CD8-positive, alpha-beta memory T cell (primary cell): ENCODE measurements at regions of chr14 and their contacts with region 1.

Region 1: GRCh38 chr14:76876076-76876475 is 49.9 kb downstream of the LRRC74A start:
- DNase-seq: peak; percentile 22 to 59 (median 34)
- H3K4me3 ChIP-seq: no peak overlapping the region
- H3K4me3 Mint-ChIP-seq: no peak overlapping the region
- H3K27ac ChIP-seq: no peak overlapping the region
- H3K27ac Mint-ChIP-seq: no peak overlapping the region
- H3K4me1 ChIP-seq: no peaks in the 10 kb centered on the region
- H3K4me1 Mint-ChIP-seq: no peaks in the 10 kb centered on the region
- H3K27me3 ChIP-seq: no peaks in the 10 kb centered on the region
- H3K27me3 Mint-ChIP-seq: peaks cover 0 to 7% of the 10 kb centered on the region in 2 donors

Region 2: DNA sequence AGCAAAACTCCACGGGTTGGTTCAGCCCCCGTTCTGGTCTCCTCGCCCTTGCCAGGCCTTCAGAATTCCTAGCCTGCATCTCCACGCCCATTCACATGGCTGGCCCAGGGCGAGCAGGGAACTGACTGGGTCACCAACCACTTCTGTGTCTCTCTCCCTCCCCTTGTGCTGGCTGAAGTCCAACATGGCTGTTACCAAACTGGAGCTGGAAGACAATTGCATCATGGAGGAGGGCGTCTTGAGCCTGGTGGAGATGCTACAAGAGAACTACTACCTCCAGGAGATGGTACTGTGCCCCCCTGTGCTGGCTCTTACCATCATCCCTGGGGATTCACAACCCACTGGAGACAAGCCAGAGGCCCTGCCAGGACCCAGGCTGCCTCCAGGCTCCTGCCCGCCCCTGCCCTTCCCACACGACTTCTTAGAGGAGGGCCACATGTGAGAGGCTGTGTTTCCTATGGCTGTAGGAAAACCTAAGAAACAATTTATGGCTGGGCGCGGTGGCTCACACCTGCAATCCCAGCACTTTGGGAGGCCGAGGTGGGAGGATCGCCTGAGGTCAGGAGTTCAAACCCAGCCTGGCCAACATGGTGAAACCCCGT is 39.9 kb before region 1 on chr14:
- CTCF ChIA-PET with region 1: no interaction called
- POLR2A ChIA-PET with region 1: no interaction called
- DNase-seq: no peak
- H3K4me3 ChIP-seq: no peak overlapping the region
- H3K4me3 Mint-ChIP-seq: no peak overlapping the region
- H3K27ac ChIP-seq: no peak overlapping the region
- H3K27ac Mint-ChIP-seq: no peak overlapping the region
- H3K4me1 ChIP-seq: no peaks in the 10 kb centered on the region
- H3K4me1 Mint-ChIP-seq: no peaks in the 10 kb centered on the region
- H3K27me3 ChIP-seq: no peaks in the 10 kb centered on the region
- H3K27me3 Mint-ChIP-seq: peaks cover 10 to 27% of the 10 kb centered on the region in 2 donors

Region 3: DNA sequence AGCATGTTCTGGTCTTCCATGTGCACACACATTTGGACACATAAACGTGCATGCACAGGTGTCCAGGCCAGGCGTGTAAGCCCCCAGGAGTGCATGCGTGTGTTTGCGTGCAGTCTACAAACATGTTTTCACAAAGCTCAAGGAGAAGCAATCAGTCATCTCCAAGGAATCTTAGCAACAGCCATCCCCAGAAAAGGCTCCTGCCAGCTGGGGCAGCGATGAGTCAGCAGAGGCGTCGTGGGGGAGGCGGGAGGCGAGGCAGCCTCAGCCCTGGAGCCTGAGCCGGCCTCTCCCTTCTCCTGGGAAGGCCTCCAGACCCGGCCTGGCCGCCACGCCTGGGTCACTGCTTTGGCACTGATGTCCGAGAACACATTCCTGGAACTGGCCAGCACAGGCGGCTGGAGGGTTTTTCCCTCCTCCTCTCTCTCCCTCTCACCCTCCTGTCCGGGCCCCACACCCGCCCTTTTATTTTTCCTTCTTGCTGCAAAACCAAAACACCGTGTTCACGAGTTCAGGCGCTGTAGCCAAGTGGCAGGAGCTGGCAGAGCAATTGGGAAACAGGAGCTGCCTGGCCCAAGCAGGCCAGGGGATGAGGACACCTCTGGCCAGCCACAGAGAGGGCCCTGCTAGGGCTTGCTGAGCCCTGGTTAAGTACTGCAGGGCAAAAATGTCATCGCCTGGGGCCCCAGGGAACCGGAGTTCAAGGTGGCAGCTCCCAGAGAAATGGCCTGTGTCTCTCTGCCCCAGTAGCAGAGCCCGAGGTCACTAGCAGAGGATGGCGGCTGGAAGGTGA is 42.9 kb after region 1 on chr14:
- CTCF ChIA-PET with region 1: interaction called, 16 read pairs
- POLR2A ChIA-PET with region 1: no interaction called
- DNase-seq: no peak
- H3K4me3 ChIP-seq: no peak overlapping the region
- H3K4me3 Mint-ChIP-seq: no peak overlapping the region
- H3K27ac ChIP-seq: no peak overlapping the region
- H3K27ac Mint-ChIP-seq: peak overlapping the region in 2 of 8 donors; percentile 50 to 58
- H3K4me1 ChIP-seq: peaks cover 17% of the 10 kb centered on the region
- H3K4me1 Mint-ChIP-seq: peaks cover 13 to 27% (median 24%) of the 10 kb centered on the region in 3 donors
- H3K27me3 ChIP-seq: no peaks in the 10 kb centered on the region
- H3K27me3 Mint-ChIP-seq: no peaks in the 10 kb centered on the region

Region 4: DNA sequence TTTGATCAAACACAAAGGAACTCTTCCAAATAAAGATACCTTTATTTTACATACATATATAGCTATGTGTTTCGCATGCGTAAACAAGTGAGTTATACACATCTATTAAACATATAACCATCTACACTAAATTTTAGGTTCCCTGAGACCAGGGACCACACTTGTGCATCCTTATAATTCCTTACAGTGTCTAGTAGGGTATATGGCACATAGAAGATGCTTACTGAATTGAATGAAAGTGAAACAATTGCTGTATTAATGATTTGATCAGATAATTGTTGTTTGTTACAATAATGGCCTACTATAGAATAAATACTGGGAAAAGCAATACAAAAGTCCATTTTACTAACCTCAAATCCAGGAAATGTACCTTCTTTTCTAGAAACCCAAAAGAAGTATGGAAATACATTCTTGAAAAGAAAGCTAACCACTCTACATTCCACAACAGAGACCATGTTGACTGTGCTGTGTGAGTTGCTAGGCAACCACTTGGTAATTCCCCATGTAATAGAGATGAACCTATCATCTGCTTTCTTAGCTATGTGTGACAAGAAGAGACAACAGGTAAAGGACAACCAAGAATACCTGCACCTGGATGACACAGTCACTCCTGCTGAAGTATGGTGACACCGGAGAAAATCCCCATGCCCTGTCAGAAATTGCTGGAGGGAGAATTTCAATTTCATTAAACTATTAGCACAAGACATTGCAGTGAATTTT is 210.1 kb after region 1 on chr14:
- CTCF ChIA-PET with region 1: interaction called, 13 read pairs
- POLR2A ChIA-PET with region 1: no interaction called
- DNase-seq: peak in 2 of 5 donors; percentile 14 to 26
- H3K4me3 ChIP-seq: no peak overlapping the region
- H3K4me3 Mint-ChIP-seq: no peak overlapping the region
- H3K27ac ChIP-seq: no peak overlapping the region
- H3K27ac Mint-ChIP-seq: peak overlapping the region in 4 of 8 donors; percentile 47 to 83 (median 66)
- H3K4me1 ChIP-seq: peaks cover 4% of the 10 kb centered on the region
- H3K4me1 Mint-ChIP-seq: peaks cover 0 to 7% (median 5%) of the 10 kb centered on the region in 3 donors
- H3K27me3 ChIP-seq: no peaks in the 10 kb centered on the region
- H3K27me3 Mint-ChIP-seq: peaks cover 7 to 13% of the 10 kb centered on the region in 2 donors

Region 5: DNA sequence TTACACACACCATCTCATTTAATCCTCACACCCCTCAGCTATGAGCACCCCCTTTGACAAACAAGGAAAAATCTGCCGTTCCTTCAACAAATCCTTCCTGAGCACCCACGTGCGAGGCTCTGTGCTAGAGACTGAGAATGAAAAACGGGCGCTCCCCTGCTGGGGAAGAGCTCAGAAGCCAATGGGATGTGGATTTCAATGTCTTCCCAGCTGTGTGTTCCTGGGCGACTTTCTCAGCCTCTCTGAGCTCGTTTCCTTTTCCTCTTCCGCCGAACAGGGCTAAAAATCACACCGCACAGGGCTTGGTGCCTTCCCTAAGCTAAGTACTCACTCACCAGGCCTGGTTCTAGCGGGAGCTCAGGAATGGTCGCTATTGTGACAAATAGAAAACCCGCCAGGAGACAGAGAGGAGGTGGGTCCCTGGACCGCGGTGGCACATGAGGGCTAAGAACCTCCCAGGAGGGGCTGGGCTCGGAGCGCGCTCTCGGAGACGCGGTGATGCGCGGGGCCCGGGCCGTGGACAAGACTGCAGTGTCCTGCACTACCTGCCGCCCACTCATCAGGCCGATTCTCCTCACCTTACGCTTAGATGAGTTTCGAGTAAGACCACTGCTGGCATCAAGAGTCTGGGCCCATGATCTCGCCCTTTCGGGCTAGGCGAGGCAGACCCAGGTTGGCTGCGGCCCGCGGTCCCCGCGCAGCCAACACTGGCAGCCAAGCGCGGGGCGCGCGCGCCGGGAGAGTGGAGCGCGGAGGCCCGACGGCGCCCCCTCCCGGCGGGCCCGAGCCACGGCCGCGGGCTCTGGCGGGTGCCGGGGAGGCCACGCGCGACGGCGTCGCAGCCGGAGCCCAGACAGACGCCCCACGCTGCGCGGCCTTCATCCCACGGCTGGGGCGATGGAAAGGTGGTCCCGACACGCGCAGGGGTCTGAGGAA is 248.5 kb after region 1 on chr14:
- CTCF ChIA-PET with region 1: interaction called, 16 read pairs
- POLR2A ChIA-PET with region 1: no interaction called
- DNase-seq: peak; percentile 55 to 76 (median 63)
- H3K4me3 ChIP-seq: peak overlapping the region; percentile 84
- H3K4me3 Mint-ChIP-seq: peak overlapping the region; percentile 76 to 87 (median 82)
- H3K27ac ChIP-seq: peak overlapping the region; percentile 64
- H3K27ac Mint-ChIP-seq: peak overlapping the region; percentile 14 to 97 (median 88)
- H3K4me1 ChIP-seq: peaks cover 42% of the 10 kb centered on the region
- H3K4me1 Mint-ChIP-seq: peaks cover 29 to 57% (median 53%) of the 10 kb centered on the region in 3 donors
- H3K27me3 ChIP-seq: peaks cover 9% of the 10 kb centered on the region
- H3K27me3 Mint-ChIP-seq: peaks cover 9 to 14% of the 10 kb centered on the region in 2 donors